ENCODE measurements at regions of chr12 and their contacts with region 1.

Region 1: DNA sequence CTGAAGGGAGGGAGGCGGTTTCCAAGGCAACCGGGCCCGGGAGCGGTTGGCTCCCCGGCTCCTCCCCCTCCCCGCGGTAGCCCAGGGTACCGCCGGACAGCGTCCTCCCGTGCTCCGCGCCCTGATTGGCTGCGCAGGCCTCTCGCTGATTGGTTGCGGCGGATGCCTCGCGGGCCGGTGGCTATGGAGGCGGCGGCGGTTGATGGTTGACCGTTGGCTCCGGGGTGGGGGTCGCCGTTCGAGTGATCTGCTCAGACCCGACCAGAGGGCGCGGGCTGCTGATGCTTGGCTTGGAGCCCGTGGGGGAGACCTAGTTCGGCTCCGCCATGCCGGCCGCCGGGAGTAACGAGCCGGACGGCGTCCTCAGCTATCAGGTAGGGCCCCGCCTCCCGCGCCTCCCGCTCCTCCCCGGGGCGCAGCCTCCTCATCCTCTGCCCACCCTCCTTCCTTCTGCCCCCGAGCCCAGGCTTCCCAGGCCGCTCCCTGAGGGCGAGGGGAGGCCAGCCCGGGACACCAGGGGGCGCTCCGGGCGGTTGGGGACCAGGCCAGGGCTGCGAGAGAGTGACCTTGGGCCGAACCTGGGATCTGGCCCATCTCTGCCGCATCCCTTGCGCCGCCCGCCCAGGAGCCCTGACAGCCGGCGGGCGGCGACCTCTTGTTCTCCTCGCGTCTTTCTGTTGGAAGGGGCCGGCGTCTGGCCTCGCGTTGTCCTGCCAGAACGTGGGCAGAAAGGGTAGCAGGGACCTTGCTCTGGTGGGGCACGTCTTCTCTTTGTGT is at the start of gene SLC4A8:
- DNase-seq: peak; percentile 89
- ATAC-seq: peak; percentile 96
- H3K4me3 Mint-ChIP-seq: peak within 1 kb of the TSS; percentile 71
- H3K27ac Mint-ChIP-seq: no peak within 1 kb of the TSS
- H3K4me1 Mint-ChIP-seq: peaks cover 11% of the 10 kb centered on the region
- H3K27me3 Mint-ChIP-seq: no peaks in the 10 kb centered on the region
- total RNA-seq, gene SLC4A8: 1.7 to 2.0 TPM

Region 2: DNA sequence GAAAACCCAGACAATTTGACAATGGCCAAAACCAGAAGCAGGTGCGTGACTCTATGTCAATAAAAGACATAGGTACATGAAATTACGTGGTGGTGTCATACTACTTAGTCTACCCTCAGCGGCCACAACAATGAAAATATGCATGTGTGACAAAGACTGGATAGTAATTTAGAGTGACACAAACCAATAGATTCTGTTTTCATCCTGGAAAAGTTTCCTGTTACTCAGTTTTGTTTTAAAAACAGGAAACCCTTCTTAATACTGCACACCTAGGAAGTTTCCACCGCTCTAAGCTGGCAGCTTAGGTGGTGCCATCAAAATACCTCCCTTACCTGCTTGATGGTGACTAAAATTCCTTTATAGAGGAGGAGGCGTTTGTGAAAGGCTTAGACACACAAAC is 222.1 kb before region 1 on chr12:
- CTCF ChIA-PET with region 1: no interaction called
- POLR2A ChIA-PET with region 1: no interaction called
- intact Hi-C with region 1: no loop called
- DNase-seq: peak; percentile 34
- ATAC-seq: peak; percentile 82
- H3K4me3 Mint-ChIP-seq: no peak overlapping the region
- H3K27ac Mint-ChIP-seq: peak overlapping the region; percentile 71
- H3K4me1 Mint-ChIP-seq: peaks cover 19% of the 10 kb centered on the region
- H3K27me3 Mint-ChIP-seq: no peaks in the 10 kb centered on the region

Region 3: GRCh38 chr12:51413149-51413548 is 11.7 kb before region 1 on chr12:
- CTCF ChIA-PET with region 1: interaction called, 14 read pairs
- POLR2A ChIA-PET with region 1: no interaction called
- intact Hi-C with region 1: no loop called
- DNase-seq: no peak
- ATAC-seq: no peak
- H3K4me3 Mint-ChIP-seq: no peak overlapping the region
- H3K27ac Mint-ChIP-seq: no peak overlapping the region
- H3K4me1 Mint-ChIP-seq: no peaks in the 10 kb centered on the region
- H3K27me3 Mint-ChIP-seq: no peaks in the 10 kb centered on the region

Region 4: GRCh38 chr12:51590347-51591019 is 165.6 kb after region 1 on chr12:
- CTCF ChIA-PET with region 1: no interaction called
- POLR2A ChIA-PET with region 1: no interaction called
- intact Hi-C with region 1: loop called (anchors 1 to 2 kb)
- DNase-seq: peak; percentile 88
- ATAC-seq: peak; percentile 89
- H3K4me3 Mint-ChIP-seq: peak overlapping the region; percentile 76
- H3K27ac Mint-ChIP-seq: peak overlapping the region; percentile 63
- H3K4me1 Mint-ChIP-seq: peaks cover 16% of the 10 kb centered on the region
- H3K27me3 Mint-ChIP-seq: peaks cover 47% of the 10 kb centered on the region

Region 5: DNA sequence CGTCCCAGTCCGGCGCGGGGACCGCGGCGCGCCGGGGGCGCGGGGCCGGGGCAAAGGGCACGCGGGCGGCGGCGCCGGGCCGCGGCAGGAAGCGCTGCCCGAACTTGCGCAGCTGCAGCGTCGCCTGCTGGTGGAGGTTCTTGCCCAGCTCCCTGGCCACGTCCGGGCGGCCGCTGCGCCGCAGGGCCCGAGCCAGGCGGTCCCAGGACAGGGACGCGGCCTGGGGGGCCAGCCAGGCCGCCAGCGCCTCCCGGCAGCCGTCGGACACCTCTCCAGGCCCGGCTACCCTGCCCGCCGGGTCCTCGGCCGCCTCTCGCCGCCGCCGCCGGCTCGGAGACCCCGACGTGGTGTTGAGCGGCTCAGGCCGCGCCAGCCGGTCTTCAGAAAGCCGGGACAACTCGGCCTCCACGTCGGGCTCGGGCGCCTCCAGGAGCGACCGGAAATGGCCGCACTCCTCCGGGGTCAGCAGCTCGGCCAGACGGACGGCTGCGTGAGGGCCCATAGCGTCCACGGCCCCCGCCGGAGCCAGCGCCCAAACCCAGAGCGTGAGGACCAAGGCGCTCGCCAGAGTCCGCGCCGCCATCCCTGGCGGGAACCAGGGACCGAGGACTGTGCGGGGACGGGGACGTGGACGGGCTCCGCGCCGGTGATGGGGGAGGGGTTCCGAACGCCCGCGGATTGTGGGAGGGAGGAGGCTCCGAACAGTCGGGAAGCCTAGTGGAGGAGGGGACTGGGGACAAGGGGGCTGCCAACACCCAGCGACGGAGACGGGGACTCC is 389.6 kb after region 1 on chr12:
- CTCF ChIA-PET with region 1: interaction called, 4 read pairs
- POLR2A ChIA-PET with region 1: no interaction called
- intact Hi-C with region 1: loop called in 1 of 2 experiments (anchors 1 kb)
- DNase-seq: peak; percentile 85
- ATAC-seq: peak; percentile 90
- H3K4me3 Mint-ChIP-seq: peak overlapping the region; percentile 54
- H3K27ac Mint-ChIP-seq: peak overlapping the region; percentile 70
- H3K4me1 Mint-ChIP-seq: peaks cover 9% of the 10 kb centered on the region
- H3K27me3 Mint-ChIP-seq: no peaks in the 10 kb centered on the region

Region 6: DNA sequence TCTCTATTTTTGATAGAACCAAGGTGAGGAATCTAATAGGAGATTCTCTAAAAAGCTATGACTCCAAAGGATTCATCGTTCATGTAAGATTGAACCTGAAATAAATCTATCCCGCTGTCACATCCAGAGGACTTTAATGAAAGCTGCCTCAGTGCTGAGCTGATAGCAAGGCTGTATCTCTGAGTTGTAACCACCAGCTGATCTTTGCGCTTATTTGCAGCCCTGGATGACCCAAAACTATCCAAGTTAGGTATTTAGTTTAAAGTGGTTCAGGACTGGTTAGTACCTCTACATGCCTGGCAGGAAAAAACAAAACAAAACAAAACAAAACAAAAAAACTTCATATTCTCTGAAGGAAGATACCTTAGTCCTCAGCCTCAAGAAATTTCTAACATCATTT is 454.3 kb after region 1 on chr12:
- CTCF ChIA-PET with region 1: interaction called, 16 read pairs
- POLR2A ChIA-PET with region 1: no interaction called
- intact Hi-C with region 1: loop called (anchors 1 to 5 kb)
- DNase-seq: no peak
- ATAC-seq: no peak
- H3K4me3 Mint-ChIP-seq: no peak overlapping the region
- H3K27ac Mint-ChIP-seq: no peak overlapping the region
- H3K4me1 Mint-ChIP-seq: no peaks in the 10 kb centered on the region
- H3K27me3 Mint-ChIP-seq: no peaks in the 10 kb centered on the region

Region 7: GRCh38 chr12:52486166-52487105 is 1061.6 kb after region 1 on chr12:
- CTCF ChIA-PET with region 1: no interaction called
- POLR2A ChIA-PET with region 1: no interaction called
- intact Hi-C with region 1: no loop called
- DNase-seq: no peak
- ATAC-seq: no peak
- H3K4me3 Mint-ChIP-seq: no peak overlapping the region
- H3K27ac Mint-ChIP-seq: no peak overlapping the region
- H3K4me1 Mint-ChIP-seq: no peaks in the 10 kb centered on the region
- H3K27me3 Mint-ChIP-seq: peaks cover 35% of the 10 kb centered on the region

Measured in activated CD4-positive, alpha-beta T cell treated with anti-CD3 and anti-CD28 coated beads for 36 hours (primary cell).